ENCODE measurements at regions of chr2 and their contacts with region 1.

Region 1: DNA sequence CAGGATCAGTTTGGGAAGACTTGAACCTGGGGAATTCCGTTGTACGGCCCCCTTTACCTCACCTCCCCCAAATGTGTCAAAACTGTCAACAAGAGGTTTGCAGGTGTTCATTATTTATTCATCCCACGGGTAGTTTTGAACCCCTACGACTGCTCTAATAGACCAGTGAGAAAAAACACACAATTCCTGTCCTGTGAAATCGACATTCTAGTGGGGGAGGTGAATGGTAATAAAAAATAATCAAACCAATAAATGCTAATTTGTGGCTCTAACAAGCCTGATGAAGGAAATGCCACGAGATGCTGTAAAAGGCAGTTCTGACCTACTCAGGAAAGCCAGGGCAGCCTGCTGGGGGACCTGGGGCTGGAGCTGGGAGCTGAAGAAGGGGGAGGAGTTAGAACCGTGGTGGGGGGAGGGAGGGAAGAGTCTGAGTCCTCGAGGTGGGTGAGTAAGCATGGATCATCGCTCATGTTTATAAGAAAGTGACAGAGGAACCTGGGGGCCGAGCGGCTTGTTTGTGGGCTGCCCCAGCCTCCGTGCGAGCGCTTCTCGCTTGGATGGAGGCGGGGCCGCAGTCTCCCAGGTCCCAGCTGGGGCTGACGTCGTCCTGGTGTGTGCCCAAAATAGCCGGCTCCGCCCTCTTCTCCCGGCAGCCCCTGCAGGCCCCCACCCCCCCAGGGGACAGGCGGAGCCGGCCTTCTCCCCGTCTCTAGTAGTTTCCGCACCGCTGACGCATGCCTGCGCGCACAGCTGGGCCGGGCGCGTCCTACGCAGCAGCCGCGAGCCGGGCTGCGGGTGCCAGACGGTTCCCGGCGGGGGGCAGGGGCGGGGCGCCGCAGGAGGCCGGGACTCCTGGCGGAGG is at the start of gene DNAJB2:
- DNase-seq: peak; percentile 98 to 99
- ATAC-seq: peak; percentile 76 to 93 (median 80)
- H3K4me3 ChIP-seq: peak within 1 kb of the TSS; percentile 79
- H3K4me3 Mint-ChIP-seq: peak within 1 kb of the TSS; percentile 94
- H3K27ac ChIP-seq: peak within 1 kb of the TSS; percentile 99
- H3K27ac Mint-ChIP-seq: peak within 1 kb of the TSS; percentile 97 to 99
- H3K4me1 ChIP-seq: peaks cover 30% of the 10 kb centered on the region
- H3K4me1 Mint-ChIP-seq: peaks cover 35 to 47% of the 10 kb centered on the region in 2 donors
- H3K27me3 ChIP-seq: no peaks in the 10 kb centered on the region
- H3K27me3 Mint-ChIP-seq: no peaks in the 10 kb centered on the region
- CTCF ChIP-seq: no peak
- total RNA-seq, gene DNAJB2: 70.3 to 108 (median 98.3) TPM

Region 2: DNA sequence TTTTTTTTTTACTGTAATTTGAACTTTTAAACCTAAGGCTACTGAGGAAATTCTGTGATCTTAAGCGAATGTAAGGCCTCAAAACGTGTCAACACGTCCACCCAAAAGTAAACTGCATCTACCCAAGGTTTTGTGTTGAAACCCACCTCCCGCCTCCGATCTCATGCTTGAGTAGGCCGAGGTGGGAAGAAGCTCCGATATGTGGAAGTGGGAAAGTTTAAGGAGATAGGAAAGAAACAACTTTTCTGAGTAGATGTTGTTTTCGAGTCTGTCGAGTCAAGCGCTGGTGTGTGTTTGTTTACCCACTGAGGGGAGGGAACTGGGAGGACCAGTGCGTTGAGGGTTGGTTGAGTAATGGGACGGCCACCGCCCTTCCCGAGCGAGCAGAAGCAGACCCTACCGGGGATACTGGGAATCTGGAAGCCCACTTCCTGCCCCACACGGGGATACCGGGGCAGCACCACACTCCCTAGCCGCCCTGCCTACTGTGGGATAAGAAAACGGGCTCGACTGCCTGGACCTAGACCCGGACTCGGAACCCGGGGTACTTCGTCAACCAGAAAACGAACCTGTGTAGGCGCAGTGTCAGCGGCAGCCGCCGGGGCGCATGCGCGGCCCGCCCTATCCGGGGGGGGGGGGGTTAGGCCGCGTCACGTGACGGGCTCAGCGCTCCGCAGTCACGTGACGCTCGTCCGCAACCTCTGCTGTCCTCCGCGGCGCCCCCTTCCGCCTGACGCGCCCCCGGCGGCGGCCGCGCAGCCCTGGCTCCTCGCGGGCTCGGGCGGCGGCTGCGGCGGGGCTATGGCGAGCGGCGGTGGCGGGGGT is 101.1 kb before region 1 on chr2 and contains the start of gene RETREG2:
- intact Hi-C with region 1: loop called (anchors 1 kb)
- DNase-seq: peak; percentile 79 to 96
- ATAC-seq: peak; percentile 57 to 71 (median 63)
- H3K4me3 ChIP-seq: peak within 1 kb of the TSS; percentile 61
- H3K4me3 Mint-ChIP-seq: peak within 1 kb of the TSS; percentile 97
- H3K27ac ChIP-seq: peak within 1 kb of the TSS; percentile 98
- H3K27ac Mint-ChIP-seq: peak within 1 kb of the TSS; percentile 99 to 100
- H3K4me1 ChIP-seq: peaks cover 43% of the 10 kb centered on the region
- H3K4me1 Mint-ChIP-seq: peaks cover 47 to 67% of the 10 kb centered on the region in 2 donors
- H3K27me3 ChIP-seq: no peaks in the 10 kb centered on the region
- H3K27me3 Mint-ChIP-seq: no peaks in the 10 kb centered on the region
- CTCF ChIP-seq: peak; percentile 38
- total RNA-seq, gene RETREG2: 77.0 to 81.9 (median 79.0) TPM

Region 3: DNA sequence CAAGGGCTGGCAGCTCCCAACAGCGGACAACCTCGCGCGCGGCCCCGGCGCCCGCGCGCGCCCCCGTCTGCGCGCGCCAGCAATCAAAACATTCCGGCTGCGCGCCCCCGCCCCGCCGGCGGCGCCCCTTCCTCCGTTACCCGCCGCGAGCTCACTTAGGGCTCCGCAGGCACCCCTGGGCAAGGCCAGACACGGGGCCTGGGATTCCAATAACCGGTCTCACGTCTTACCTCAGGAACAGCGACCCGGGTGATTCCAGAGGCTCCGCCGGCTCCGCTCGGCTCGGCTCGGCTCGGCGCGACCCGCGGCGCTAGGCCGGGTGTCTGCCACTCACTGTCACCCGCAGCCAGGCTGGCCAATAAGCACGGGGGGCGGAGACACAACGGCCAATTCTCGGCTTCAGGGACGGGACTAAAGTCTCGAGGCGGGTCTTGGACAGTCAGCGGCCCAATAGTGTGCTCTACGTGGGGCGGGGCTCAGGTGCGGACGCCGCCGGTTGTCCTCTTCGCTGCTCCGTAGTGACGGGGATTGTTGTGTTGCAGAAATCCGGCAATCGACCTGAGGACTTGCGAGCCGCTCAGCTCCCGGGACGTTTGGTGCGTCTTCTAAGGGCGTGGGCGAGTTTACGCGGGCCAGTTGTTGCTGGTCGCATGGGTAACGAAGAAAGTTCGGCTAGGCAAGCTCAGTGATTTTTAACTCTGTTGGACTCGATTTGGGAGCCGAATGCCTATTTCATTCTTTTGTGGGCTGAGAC is 49.4 kb before region 1 on chr2 and contains the starts of genes ANKZF1 and ATG9A:
- intact Hi-C with region 1: loop called (anchors 1 kb)
- DNase-seq: peak; percentile 96 to 99
- ATAC-seq: peak; percentile 96 to 99 (median 97)
- H3K4me3 ChIP-seq: peak within 1 kb of the TSS; percentile 88
- H3K4me3 Mint-ChIP-seq: peak within 1 kb of the TSS; percentile 100
- H3K27ac ChIP-seq: peak within 1 kb of the TSS; percentile 88
- H3K27ac Mint-ChIP-seq: peak within 1 kb of the TSS; percentile 99
- H3K4me1 ChIP-seq: peaks cover 34% of the 10 kb centered on the region
- H3K4me1 Mint-ChIP-seq: peaks cover 31 to 54% of the 10 kb centered on the region in 2 donors
- H3K27me3 ChIP-seq: no peaks in the 10 kb centered on the region
- H3K27me3 Mint-ChIP-seq: no peaks in the 10 kb centered on the region
- CTCF ChIP-seq: no peak
- total RNA-seq, gene ANKZF1: 100 to 148 (median 117) TPM
- total RNA-seq, gene ATG9A: 98.1 to 110 (median 108) TPM

Region 4: DNA sequence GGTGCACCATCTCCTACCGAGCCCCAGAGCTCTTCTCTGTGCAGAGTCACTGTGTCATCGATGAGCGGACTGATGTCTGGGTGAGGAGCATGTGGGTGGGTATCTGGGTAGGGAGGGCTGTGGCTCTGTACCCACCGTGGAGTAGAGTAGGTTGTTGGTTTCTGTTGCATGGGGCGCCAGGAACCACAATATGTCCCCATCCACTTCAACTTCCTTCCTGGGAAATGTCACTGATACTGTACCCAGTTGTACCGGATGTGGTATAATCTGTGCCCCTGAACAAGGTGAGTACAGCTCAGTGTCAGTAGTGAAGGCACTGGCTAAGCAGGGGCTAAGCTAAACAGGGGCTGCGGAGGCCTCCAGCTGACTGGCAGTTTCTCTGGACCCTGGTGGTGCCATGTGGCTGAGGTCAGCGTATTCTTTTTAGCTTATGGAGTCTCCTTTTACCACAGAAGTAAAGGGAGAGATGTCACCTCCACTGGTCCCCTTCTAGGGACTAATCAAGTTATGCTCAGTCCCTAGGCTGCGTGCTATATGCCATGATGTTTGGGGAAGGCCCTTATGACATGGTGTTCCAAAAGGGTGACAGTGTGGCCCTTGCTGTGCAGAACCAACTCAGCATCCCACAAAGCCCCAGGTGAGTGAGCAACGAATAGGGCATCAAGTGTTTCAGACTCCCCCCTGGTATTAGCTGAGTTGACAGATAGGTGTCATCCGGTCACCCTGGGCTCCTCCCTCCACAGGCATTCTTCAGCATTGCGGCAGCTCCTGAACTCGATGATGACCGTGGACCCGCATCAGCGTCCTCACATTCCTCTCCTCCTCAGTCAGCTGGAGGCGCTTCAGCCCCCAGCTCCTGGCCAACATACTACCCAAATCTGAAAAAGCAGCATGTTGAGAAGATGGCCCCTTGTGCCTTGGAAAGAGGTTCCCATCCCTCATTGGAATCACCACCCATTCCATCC is 30.9 kb before region 1 on chr2:
- intact Hi-C with region 1: no loop called
- DNase-seq: peak in 1 of 2 donors; percentile 89
- ATAC-seq: peak; percentile 31 to 71 (median 35)
- H3K4me3 ChIP-seq: no peak overlapping the region
- H3K4me3 Mint-ChIP-seq: peak overlapping the region; percentile 94
- H3K27ac ChIP-seq: peak overlapping the region; percentile 97
- H3K27ac Mint-ChIP-seq: peak overlapping the region; percentile 86 to 98
- H3K4me1 ChIP-seq: peaks cover 78% of the 10 kb centered on the region
- H3K4me1 Mint-ChIP-seq: peaks cover 54 to 83% of the 10 kb centered on the region in 2 donors
- H3K27me3 ChIP-seq: no peaks in the 10 kb centered on the region
- H3K27me3 Mint-ChIP-seq: no peaks in the 10 kb centered on the region
- CTCF ChIP-seq: no peak

Region 5: GRCh38 chr2:219294356-219295351 is 15.8 kb after region 1 on chr2:
- intact Hi-C with region 1: loop called (anchors 1 kb)
- DNase-seq: peak; percentile 88 to 96
- ATAC-seq: peak; percentile 95 to 97 (median 95)
- H3K4me3 ChIP-seq: peak overlapping the region; percentile 45
- H3K4me3 Mint-ChIP-seq: peak overlapping the region; percentile 73
- H3K27ac ChIP-seq: peak overlapping the region; percentile 69
- H3K27ac Mint-ChIP-seq: peak overlapping the region; percentile 78 to 80
- H3K4me1 ChIP-seq: peaks cover 14% of the 10 kb centered on the region
- H3K4me1 Mint-ChIP-seq: peaks cover 6 to 17% of the 10 kb centered on the region in 2 donors
- H3K27me3 ChIP-seq: peaks cover 7% of the 10 kb centered on the region
- H3K27me3 Mint-ChIP-seq: peaks cover 0 to 4% of the 10 kb centered on the region in 2 donors
- CTCF ChIP-seq: peak; percentile 99

Region 6: DNA sequence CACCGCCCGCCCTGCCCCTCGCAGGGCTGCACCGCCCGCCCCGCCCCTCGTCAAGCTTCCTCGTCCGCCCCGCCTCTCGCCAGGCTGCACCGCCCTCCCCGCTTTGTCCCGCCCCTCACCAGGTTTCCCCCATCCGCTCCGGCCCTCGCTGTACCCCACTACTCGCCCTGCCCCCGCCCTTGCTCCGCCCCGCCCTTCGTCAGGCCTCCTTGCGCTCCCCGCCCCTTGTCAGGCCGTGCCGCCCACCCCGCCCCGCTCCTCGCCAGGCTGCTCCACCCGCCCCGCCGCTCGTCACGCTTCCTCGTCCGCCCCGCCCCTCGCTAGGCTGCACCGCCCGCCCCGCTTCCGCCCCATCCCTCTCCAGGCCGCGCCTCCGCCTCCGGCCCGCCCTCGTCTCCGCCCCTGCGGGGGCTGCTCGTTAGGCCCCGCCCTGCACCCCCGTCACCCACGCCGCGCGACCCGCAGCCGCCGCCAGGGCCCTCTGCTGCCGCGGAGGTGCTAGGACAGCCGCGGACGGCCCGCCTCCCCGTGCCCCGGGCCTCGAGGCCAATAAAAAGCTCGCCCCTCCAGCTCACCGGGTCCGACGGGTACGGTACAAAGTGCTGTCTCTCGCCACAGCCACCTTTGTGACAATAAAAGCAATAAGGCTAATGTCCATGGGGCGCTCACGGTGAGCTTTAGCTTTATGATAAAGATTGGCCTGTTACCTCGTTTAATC is 109.4 kb after region 1 on chr2:
- intact Hi-C with region 1: loop called (anchors 1 kb)
- DNase-seq: peak; percentile 98 to 99
- ATAC-seq: peak; percentile 79 to 90 (median 80)
- H3K4me3 ChIP-seq: peak overlapping the region; percentile 12
- H3K4me3 Mint-ChIP-seq: peak overlapping the region; percentile 63
- H3K27ac ChIP-seq: peak overlapping the region; percentile 71
- H3K27ac Mint-ChIP-seq: peak overlapping the region; percentile 92 to 98
- H3K4me1 ChIP-seq: peaks cover 18% of the 10 kb centered on the region
- H3K4me1 Mint-ChIP-seq: peaks cover 4 to 21% of the 10 kb centered on the region in 2 donors
- H3K27me3 ChIP-seq: no peaks in the 10 kb centered on the region
- H3K27me3 Mint-ChIP-seq: peaks cover 0 to 4% of the 10 kb centered on the region in 2 donors
- CTCF ChIP-seq: peak; percentile 61

Region 7: DNA sequence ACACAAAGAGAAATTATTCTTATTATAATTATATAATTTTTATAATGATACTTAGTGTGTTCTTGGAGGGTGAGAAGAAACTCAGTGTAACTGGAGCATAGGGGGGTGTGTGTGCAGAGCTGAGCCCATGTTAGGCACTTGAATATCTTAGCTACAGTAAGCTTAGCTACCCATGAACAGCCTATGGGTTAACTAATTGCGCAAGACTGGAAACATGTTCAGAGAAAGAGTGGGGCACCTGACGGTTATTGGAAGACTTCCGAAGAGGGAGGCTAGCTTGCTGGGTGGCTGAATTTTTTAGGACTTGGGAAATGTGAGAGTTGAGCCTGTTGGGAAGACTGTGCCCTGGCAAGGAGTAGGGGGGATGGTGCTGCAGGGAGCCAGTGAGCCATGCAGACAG is 577.7 kb after region 1 on chr2:
- intact Hi-C with region 1: no loop called
- DNase-seq: no peak
- ATAC-seq: no peak
- H3K4me3 ChIP-seq: no peak overlapping the region
- H3K4me3 Mint-ChIP-seq: no peak overlapping the region
- H3K27ac ChIP-seq: no peak overlapping the region
- H3K27ac Mint-ChIP-seq: no peak overlapping the region
- H3K4me1 ChIP-seq: no peaks in the 10 kb centered on the region
- H3K4me1 Mint-ChIP-seq: no peaks in the 10 kb centered on the region
- H3K27me3 ChIP-seq: no peaks in the 10 kb centered on the region
- H3K27me3 Mint-ChIP-seq: peaks cover 0 to 2% of the 10 kb centered on the region in 2 donors
- CTCF ChIP-seq: no peak

Measured in natural killer cell (primary cell).